ENCODE measurements at regions of chr9 and their contacts with region 1.

Region 1: DNA sequence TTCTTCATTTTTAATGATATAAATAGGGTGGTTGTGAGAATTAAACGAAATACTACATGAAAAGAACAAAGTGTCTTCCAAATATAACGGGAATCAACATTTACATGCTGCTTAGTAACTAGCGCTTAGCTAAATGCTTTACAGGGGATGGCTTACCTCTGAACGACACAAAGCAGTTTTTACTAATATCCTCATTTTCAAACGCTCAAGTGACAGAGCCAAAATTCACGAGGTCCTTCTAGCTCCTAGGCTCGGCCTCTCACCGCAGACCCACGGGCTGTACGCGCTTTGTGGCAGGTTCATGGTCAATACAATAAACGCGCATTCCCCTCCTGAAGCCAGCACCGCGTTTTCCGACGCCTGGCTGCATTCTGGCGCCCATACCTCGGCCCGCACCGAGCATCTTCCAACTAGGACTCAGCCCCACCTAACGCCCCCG is 442 bp downstream of the ZNF510 start:
- DNase-seq: no peak
- H3K4me3 ChIP-seq: peak overlapping the region; percentile 85
- H3K27ac ChIP-seq: no peak overlapping the region
- H3K4me1 ChIP-seq: no peaks in the 10 kb centered on the region; the same call in 1 of the 2 replicates
- H3K27me3 ChIP-seq: no peaks in the 10 kb centered on the region
- CTCF ChIP-seq: no peak

Region 2: GRCh38 chr9:96449845-96450612 is 327.4 kb before region 1 on chr9 and contains the start of gene HABP4:
- CTCF ChIA-PET with region 1: no interaction called
- POLR2A ChIA-PET with region 1: no interaction called
- intact Hi-C with region 1: loop called (anchors 10 kb)
- DNase-seq: peak; percentile 74 to 97
- H3K4me3 ChIP-seq: peak within 1 kb of the TSS; percentile 65
- H3K27ac ChIP-seq: no peak within 1 kb of the TSS
- H3K4me1 ChIP-seq: peaks cover 9% of the 10 kb centered on the region
- H3K27me3 ChIP-seq: no peaks in the 10 kb centered on the region
- CTCF ChIP-seq: no peak
- total RNA-seq, gene HABP4: 8.1 and 11.0 TPM in 2 replicates

Region 3: GRCh38 chr9:96686548-96687335 is 90.7 kb before region 1 on chr9:
- CTCF ChIA-PET with region 1: interaction called, 3 read pairs
- POLR2A ChIA-PET with region 1: no interaction called
- intact Hi-C with region 1: loop called (anchors 10 kb)
- DNase-seq: peak; percentile 53 to 91
- H3K4me3 ChIP-seq: peak overlapping the region; percentile 56
- H3K27ac ChIP-seq: no peak overlapping the region
- H3K4me1 ChIP-seq: peaks cover 3% of the 10 kb centered on the region; the same call in 1 of the 2 replicates
- H3K27me3 ChIP-seq: no peaks in the 10 kb centered on the region
- CTCF ChIP-seq: peak; percentile 66

Region 4: GRCh38 chr9:96726946-96727345 is 50.5 kb before region 1 on chr9:
- CTCF ChIA-PET with region 1: no interaction called
- POLR2A ChIA-PET with region 1: no interaction called
- intact Hi-C with region 1: no loop called
- DNase-seq: no peak
- H3K4me3 ChIP-seq: no peak overlapping the region
- H3K27ac ChIP-seq: no peak overlapping the region
- H3K4me1 ChIP-seq: no peaks in the 10 kb centered on the region
- H3K27me3 ChIP-seq: no peaks in the 10 kb centered on the region
- CTCF ChIP-seq: no peak

Region 5: GRCh38 chr9:97666907-97667686 is 889.7 kb after region 1 on chr9:
- CTCF ChIA-PET with region 1: no interaction called
- POLR2A ChIA-PET with region 1: no interaction called
- intact Hi-C with region 1: no loop called
- DNase-seq: no peak
- H3K4me3 ChIP-seq: no peak overlapping the region
- H3K27ac ChIP-seq: no peak overlapping the region
- H3K4me1 ChIP-seq: no peaks in the 10 kb centered on the region
- H3K27me3 ChIP-seq: no peaks in the 10 kb centered on the region
- CTCF ChIP-seq: no peak